ENCODE measurements at regions of chrX and their contacts with region 1.

Region 1: GRCh38 chrX:19728915-19729314 is 158.5 kb downstream of the SH3KBP1 start:
- DNase-seq: no peak
- ATAC-seq: no peak
- H3K4me3 ChIP-seq: no peak overlapping the region
- H3K27ac ChIP-seq: no peak overlapping the region
- H3K4me1 ChIP-seq: no peaks in the 10 kb centered on the region
- H3K27me3 ChIP-seq: no peaks in the 10 kb centered on the region
- CTCF ChIP-seq: no peak

Region 2: GRCh38 chrX:19772826-19773628 is 44.1 kb after region 1 on chrX:
- CTCF ChIA-PET with region 1: no interaction called
- POLR2A ChIA-PET with region 1: interaction called, 17 read pairs
- in situ Hi-C with region 1: no loop called
- intact Hi-C with region 1: no loop called
- DNase-seq: no peak
- ATAC-seq: no peak
- H3K4me3 ChIP-seq: no peak overlapping the region
- H3K27ac ChIP-seq: no peak overlapping the region
- H3K4me1 ChIP-seq: no peaks in the 10 kb centered on the region; the same call in 1 of the 2 replicates
- H3K27me3 ChIP-seq: no peaks in the 10 kb centered on the region
- CTCF ChIP-seq: no peak

Measured in Panc1 (cell line).